Breast epithelium (tissue), 4 donors: ENCODE measurements at regions of chr6 and their contacts with region 1.

Region 1: DNA sequence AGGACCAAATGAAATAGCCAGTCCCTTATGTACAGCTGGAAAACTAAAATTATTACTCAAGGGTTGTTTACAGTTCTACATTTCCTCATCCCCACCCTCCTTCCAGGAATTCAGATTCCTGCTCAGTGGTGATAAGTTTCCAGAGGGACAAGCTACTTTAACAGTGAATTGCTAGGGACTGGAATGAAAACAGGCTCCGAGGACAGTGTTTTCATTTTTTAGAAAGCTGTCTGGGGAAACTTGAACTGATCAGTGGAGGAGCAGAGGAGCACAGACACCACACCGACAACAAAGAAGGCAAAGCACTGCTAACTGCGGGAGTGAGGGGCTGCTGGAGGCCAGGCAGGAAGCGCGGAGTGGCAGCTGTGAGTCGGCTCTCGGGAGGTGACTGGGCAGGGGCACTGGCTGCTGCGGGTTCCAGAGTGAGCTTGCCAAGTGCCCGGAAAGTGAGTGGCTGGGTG is 322.2 kb downstream of the ESR1 start:
- DNase-seq: no peak
- H3K4me3 ChIP-seq: peak overlapping the region in 2 of 3 donors; percentile 33 to 55
- H3K27ac ChIP-seq: peak overlapping the region; percentile 34 to 88
- H3K4me1 ChIP-seq: no peaks in the 10 kb centered on the region
- H3K27me3 ChIP-seq: no peaks in the 10 kb centered on the region
- CTCF ChIP-seq: no peak
- POLR2A ChIP-seq: no peak

Region 2: DNA sequence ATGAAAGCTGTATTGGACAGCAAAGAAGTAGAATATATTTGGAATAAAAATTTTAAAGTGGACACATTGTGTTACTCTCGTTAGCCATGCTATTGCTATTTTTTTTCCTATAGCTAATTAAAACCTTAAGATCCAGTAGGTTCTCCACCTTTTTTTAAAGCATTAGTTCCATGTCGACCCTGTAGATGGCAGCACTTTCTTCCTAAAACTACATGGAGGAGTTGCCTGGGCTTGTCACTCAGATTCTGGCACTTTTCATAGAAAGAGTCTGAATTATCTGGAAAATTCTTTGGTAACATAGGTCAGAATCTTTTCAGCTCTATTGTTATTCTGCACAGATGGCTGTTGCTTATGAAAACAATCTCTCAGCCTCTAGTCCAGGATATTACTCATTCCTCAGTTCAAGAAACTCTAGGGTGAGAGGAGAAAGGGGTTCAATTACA is 364.3 kb before region 1 on chr6:
- intact Hi-C with region 1: loop called (anchors 10 kb)
- DNase-seq: peak in 1 of 2 donors; percentile 40
- H3K4me3 ChIP-seq: no peak overlapping the region
- H3K27ac ChIP-seq: no peak overlapping the region
- H3K4me1 ChIP-seq: no peaks in the 10 kb centered on the region
- H3K27me3 ChIP-seq: no peaks in the 10 kb centered on the region
- CTCF ChIP-seq: peak; percentile 43 to 69 (median 69)
- POLR2A ChIP-seq: no peak